Heart left ventricle (tissue), 16 donors: ENCODE measurements at regions of chr1 and their contacts with region 1.

Region 1: DNA sequence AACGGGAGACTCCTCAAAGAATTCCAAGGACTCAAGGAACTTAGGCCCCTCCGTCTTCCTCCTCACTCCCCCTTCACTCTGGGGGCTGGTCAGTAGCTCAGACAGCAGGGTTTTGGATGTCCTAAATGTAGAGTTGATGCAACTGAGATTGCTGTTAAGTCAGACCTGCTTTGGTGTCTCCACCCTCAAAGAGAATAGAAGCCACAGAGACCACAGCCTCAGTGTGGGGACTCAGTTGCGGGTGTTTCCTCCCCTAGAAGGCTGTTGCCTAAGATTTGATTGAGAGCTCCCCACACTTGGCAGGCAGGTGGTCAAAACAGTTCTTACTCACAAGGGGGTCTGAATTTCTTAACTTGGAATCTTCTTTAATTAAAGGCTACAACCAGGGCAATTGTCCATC is 7.6 kb downstream of the MAN1C1 start:
- DNase-seq: no peak
- ATAC-seq: no peak
- H3K4me3 ChIP-seq: no peak overlapping the region
- H3K27ac ChIP-seq: no peak overlapping the region
- H3K4me1 ChIP-seq: peaks cover 0 to 47% (median 26%) of the 10 kb centered on the region in 12 donors
- H3K27me3 ChIP-seq: no peaks in the 10 kb centered on the region
- CTCF ChIP-seq: no peak
- POLR2A ChIP-seq: no peak

Region 2: DNA sequence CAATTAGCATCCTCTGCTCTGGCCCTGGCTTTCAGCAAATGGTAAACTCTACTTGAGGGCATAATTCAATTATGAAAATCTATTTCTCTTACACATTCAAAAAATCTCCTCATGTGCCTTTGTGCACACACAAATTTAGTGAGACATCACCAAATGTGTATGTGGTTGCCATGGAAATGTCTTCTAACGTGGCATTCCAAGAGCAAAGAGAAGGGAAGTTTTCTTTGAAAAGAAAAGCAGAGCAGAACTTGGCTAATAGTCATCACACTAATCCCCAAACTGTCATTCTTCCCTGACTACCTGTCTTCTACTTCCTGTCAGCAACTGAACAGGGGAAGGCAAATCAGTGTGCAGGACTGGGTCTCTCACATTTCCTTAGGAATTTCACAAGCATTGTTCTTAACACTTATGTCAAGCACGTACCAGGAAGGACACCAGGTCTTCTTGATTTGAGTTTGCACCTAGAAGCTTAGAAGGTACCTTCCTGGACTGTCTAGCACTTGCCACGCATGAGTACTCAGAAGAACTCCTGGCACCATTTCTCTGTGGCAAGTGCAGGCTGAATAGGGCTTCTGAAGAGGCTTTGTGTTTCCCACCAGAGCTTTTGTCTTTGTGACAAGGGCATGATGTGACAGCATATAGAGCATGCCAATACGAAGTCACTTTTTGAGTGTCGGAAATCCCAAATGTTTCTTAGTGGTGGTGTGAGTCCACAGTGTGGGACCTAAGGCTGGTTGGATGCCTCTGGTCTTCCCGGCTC is 24.7 kb after region 1 on chr1:
- intact Hi-C with region 1: no loop called
- DNase-seq: no peak
- ATAC-seq: no peak
- H3K4me3 ChIP-seq: no peak overlapping the region
- H3K27ac ChIP-seq: no peak overlapping the region
- H3K4me1 ChIP-seq: peaks cover 3 to 74% (median 26%) of the 10 kb centered on the region in 12 donors
- H3K27me3 ChIP-seq: no peaks in the 10 kb centered on the region
- CTCF ChIP-seq: no peak
- POLR2A ChIP-seq: no peak

Region 3: GRCh38 chr1:25675729-25676476 is 51.7 kb after region 1 on chr1:
- intact Hi-C with region 1: loop called in 1 of 10 experiments (anchors 10 kb)
- DNase-seq: no peak
- ATAC-seq: no peak
- H3K4me3 ChIP-seq: no peak overlapping the region
- H3K27ac ChIP-seq: no peak overlapping the region
- H3K4me1 ChIP-seq: peaks cover 4 to 37% (median 25%) of the 10 kb centered on the region in 12 donors
- H3K27me3 ChIP-seq: no peaks in the 10 kb centered on the region
- CTCF ChIP-seq: no peak
- POLR2A ChIP-seq: no peak

Region 4: GRCh38 chr1:25688390-25689161 is 64.4 kb after region 1 on chr1:
- intact Hi-C with region 1: loop called in 4 of 10 experiments (anchors 5 kb)
- DNase-seq: peak in 1 of 5 donors; percentile 55
- ATAC-seq: peak in 3 of 4 donors; percentile 45 to 79 (median 74)
- H3K4me3 ChIP-seq: no peak overlapping the region
- H3K27ac ChIP-seq: peak overlapping the region in 11 of 12 donors; percentile 11 to 69 (median 50)
- H3K4me1 ChIP-seq: peaks cover 0 to 46% (median 19%) of the 10 kb centered on the region in 12 donors
- H3K27me3 ChIP-seq: no peaks in the 10 kb centered on the region
- CTCF ChIP-seq: no peak
- POLR2A ChIP-seq: no peak